ENCODE measurements at regions of chr17 and their contacts with region 1.

Region 1: DNA sequence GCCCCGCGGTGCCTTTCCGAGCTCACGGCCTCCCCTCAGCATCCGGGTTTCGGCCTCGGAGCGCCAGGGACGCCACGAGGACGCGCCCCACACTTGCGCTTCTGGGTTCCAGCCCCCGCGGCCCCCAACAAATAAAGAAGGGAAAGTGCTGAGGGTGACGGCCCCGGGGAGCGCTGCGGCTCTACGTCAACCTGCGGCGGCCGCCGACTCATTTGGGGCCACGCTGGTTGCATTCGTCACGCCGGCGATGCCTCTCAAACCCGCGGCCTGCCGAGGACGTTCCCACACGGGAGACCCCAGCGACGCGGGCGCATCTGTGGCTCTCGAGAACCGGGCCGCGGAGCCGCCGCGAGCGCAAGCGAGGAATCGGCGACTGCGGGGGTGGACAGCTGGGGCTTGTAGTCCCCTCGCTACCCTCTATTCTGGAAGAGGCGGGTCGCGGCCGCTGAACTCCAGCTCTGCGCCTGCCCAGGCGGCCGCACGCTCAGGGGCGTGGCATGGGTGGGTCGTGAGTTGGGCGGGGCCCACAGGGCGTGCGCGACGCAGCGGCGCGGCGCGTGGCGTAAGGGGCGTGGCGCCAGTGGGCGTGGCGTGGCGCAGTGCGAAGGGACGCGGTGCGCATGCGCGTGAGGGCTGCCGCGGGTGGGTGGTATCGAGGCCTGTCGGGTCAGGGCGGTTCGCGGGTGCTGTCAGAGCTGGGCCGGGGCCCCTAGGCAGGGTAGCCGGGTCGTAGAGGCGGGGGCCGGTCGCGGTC is at the start of gene AMZ2:
- DNase-seq: peak; percentile 97
- H3K4me3 Mint-ChIP-seq: peak within 1 kb of the TSS; percentile 85
- H3K27ac Mint-ChIP-seq: peak within 1 kb of the TSS; percentile 90
- H3K4me1 Mint-ChIP-seq: peaks cover 42% of the 10 kb centered on the region
- H3K27me3 Mint-ChIP-seq: no peaks in the 10 kb centered on the region
- total RNA-seq, gene AMZ2: 106 to 121 TPM

Region 2: GRCh38 chr17:68273722-68274121 is 26.1 kb after region 1 on chr17:
- CTCF ChIA-PET with region 1: no interaction called
- POLR2A ChIA-PET with region 1: no interaction called
- DNase-seq: no peak
- H3K4me3 Mint-ChIP-seq: no peak overlapping the region
- H3K27ac Mint-ChIP-seq: peak overlapping the region; percentile 19
- H3K4me1 Mint-ChIP-seq: no peaks in the 10 kb centered on the region
- H3K27me3 Mint-ChIP-seq: no peaks in the 10 kb centered on the region

Region 3: GRCh38 chr17:68356520-68356919 is 108.9 kb after region 1 on chr17:
- CTCF ChIA-PET with region 1: interaction called, 3 read pairs
- POLR2A ChIA-PET with region 1: interaction called, 10 read pairs
- DNase-seq: peak; percentile 85
- H3K4me3 Mint-ChIP-seq: peak overlapping the region; percentile 66
- H3K27ac Mint-ChIP-seq: peak overlapping the region; percentile 96
- H3K4me1 Mint-ChIP-seq: peaks cover 71% of the 10 kb centered on the region
- H3K27me3 Mint-ChIP-seq: no peaks in the 10 kb centered on the region

Region 4: DNA sequence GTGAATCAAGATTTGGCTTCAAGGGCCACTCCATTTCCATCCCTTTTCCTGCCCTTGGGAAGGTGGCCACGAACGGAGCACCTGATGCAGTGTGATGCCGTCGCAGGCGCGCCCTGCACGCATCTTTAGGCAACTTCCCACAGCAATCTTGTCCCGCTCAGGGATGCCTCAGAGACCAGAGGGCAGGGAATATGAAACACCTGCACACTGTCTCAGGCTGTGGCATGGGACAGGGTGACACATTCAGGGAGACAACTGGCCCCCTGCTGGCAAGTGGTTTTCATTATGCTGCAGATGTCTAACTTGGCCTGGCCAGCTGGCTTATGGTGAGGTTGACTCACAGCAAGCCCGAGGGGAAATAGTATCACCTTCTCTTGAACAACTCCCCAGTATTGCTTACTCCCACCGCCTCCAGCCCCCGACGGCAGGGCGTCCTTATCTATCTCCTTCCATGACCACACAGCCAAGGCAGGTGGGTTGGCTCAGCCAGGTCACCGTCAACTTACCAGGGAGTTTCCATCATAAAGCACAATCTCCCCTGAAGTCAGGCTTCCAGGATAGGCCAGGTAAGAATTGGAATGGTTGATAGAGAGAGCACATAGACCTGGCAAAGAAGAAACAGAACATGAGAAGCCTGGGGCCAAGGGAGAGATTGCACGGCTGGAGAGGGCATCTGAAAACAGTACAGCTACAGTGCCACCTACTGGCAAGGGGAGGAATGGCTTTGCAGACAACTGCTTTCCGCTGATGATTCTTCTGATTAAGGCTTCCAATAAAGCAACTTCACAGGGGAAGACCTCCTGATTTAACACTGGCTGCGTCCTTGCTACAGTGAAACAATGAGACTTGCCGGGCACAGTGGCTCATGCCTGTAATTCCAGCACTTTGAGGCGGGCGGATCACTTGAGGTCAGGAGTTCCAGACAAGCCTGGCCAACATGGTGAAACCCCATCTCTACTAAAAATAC is 188.5 kb after region 1 on chr17:
- CTCF ChIA-PET with region 1: interaction called, 27 read pairs
- POLR2A ChIA-PET with region 1: interaction called, 21 read pairs
- DNase-seq: peak; percentile 89
- H3K4me3 Mint-ChIP-seq: peak overlapping the region; percentile 60
- H3K27ac Mint-ChIP-seq: peak overlapping the region; percentile 90
- H3K4me1 Mint-ChIP-seq: peaks cover 67% of the 10 kb centered on the region
- H3K27me3 Mint-ChIP-seq: no peaks in the 10 kb centered on the region

Measured in activated CD4-positive, alpha-beta memory T cell treated with anti-CD3 and anti-CD28 coated beads, Interleukin-2, amount 10 ng/mL, durations not matched to agents 7 days and 5 days (primary cell).